ENCODE measurements at regions of chr12 and their contacts with region 1.

Region 1: DNA sequence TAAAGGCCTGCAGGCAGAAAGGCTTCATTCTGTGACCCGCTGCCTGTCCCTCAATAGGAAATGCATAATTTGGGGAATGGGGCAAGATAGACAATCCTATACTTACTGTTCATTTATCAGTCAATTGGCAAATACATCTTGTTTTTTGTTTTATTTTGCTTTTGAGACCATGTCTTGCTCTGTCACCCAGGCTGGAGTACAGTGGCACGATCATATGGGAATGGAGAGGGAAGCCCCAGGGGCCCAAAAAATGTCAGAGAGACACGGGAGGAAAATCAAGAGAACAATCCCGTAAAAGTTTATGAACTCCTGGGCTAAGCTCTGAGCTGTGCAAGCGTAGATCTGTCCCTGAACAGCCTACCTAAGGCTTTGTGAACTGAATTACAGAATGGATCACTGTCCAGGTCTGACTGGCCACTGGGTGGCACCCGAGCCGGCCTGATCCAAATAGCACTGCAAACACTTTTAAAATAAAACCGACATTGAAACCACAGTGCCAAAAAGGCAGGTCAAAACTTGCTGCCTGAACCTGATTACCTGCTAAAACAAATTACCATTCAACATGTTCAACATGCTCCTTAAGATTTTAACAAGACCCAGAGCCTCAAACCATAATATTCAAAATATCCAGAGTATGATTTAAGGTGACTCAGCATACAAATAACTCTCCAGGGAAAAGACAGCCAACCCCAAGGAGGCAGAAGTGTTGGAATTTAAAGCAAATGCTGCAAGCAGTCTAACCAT is 11.8 kb downstream of the COPS7A start:
- DNase-seq: peak; percentile 81
- ATAC-seq: peak; percentile 92

Region 2: DNA sequence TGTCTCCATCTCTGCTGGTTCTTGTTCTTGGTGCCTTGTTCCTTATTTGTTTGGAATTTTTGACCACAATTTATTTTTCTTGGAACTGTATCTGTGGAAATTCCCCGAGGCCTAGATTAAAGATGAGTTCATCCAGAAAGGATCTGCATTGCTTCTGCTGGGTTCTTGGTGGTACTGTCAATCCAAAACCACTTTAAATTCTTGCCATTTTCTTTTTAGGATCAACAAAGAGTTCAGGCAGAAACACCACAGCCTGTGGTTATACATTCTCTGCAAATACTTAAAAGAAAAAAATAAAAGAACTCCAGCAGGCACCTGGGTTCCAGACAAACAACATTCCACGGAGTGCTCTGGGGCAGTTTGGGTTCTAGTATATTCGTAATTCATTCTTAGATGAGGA is 259.1 kb before region 1 on chr12:
- intact Hi-C with region 1: no loop called
- DNase-seq: no peak
- ATAC-seq: no peak

Region 3: GRCh38 chr12:6493497-6494257 is 241.9 kb before region 1 on chr12 and contains the start of gene NCAPD2:
- intact Hi-C with region 1: no loop called
- DNase-seq: peak; percentile 96
- ATAC-seq: peak; percentile 97
- total RNA-seq, gene NCAPD2: 13.1 TPM

Region 4: DNA sequence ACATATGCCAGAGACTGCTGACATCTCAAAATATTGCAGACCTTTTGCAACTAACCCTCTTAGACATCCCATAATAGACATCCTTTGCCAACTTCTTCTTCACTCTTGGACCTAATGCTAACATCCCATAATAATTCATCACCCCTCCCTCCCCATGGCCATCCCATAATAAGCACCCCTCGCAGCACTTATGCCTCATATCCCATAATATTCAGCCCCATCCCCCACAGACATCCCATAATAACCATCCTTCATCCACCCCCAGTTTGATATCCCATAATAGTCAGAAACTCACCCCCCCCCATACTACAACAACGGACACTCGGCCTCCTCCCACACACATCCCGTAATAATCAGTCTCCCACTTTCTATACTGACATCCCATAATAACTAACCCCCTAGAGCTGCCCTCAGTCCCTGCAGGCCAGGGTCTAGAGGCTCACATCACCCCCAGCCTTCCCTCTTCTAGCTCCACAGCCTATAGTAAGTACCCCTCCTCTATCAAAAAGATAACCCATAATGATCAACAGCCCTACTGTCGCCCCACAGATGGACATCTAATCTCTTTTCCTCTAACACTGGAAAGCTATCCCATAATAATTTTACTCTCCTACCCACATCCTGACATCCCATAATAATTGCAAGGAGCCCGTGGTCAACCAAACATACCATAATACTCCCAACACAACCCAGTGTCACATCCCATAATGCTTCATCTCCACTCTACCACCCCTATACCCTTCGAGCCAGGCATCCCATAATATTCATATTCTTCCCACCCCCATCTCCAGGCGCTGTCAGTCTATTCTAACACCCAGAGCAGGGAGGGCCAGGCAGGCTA is 127.6 kb before region 1 on chr12:
- intact Hi-C with region 1: no loop called
- DNase-seq: no peak
- ATAC-seq: peak; percentile 1

Region 5: GRCh38 chr12:6772331-6772695 is 36.7 kb after region 1 on chr12 and contains the start of gene LAG3:
- intact Hi-C with region 1: loop called (anchors 2 kb)
- DNase-seq: peak; percentile 33
- ATAC-seq: peak; percentile 6
- total RNA-seq, gene LAG3: 0.37 TPM

Region 6: DNA sequence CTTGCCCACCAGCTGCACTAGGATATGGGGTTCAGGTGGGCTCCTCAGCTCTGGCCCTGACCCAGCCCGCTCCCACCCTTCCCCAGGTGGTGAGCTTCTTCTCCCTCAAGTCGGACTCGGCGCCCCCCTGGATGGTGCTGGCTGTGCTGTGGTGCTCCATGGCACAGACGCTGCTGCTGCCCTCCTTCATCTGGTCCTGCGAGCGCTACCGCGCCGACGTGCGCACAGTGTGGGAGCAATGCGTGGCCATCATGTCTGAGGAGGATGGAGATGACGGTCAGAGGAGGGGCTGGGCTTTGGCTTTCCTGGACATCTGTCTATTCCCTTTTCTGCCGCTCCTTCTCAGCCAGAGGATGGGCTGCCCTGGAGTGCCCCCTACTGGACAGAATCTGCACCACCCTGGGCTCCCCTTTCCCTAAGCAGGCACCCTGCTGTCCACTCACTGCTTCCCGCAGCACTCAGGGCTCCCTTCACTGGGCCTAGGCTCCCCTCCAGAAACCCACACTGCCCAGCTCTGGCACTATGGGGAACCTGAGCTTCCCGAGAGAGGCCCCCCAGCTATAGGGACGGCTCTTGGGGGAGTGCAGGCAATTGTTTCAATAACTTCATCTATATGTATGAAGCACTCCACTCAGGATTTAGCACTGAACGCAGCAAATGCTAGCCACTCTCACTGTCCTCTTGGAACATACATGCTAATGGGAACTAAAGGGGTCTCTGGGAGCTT is 89.9 kb after region 1 on chr12:
- intact Hi-C with region 1: loop called (anchors 5 kb)
- DNase-seq: peak; percentile 90
- ATAC-seq: peak; percentile 55